OCI-LY7 (cell line): ENCODE measurements at regions of chr11 and their contacts with region 1.

Region 1: DNA sequence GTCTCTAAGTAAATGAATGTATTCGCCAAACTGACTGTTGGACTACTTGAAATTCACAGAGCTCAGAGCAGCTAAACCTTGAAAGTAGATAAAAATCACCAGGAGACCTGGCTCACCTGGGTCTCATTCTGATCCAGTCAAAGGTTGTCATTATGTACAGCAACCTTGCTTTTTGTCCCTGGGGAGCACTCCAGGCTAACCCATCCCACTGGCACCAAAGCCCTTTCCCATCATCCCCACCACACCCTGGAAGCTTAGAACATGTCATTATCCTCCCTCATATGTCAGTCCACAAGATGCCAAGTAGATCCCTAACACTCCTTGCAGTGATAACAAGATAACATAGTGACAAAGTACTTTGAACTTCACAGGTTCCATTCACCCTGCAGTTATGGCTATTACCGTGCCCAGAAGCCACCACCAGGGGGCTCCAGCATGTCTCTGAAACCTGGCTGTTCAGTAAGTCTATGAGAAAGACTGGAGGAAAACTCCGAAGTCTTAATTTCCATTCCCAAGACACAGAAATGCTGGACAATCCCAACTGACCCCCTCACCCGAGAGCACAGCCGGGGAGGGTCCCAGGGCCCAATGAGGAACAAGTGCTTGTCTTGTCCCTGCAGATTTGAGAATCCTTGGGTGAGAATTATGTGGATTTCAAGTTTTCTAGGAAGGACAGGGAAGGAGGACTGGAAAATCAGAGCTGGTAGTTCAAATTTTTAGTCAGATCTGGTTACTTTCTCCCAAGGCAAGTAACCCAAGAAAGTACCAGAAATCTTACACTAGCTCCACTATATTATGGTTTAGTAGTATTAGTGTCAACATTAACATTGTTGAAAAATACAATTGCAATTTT is 43.0 kb upstream of the USP47 start:
- DNase-seq: peak; percentile 69
- H3K4me3 ChIP-seq: no peak overlapping the region
- H3K27ac ChIP-seq: no peak overlapping the region
- H3K4me1 ChIP-seq: no peaks in the 10 kb centered on the region
- CTCF ChIP-seq: peak; percentile 94

Region 2: DNA sequence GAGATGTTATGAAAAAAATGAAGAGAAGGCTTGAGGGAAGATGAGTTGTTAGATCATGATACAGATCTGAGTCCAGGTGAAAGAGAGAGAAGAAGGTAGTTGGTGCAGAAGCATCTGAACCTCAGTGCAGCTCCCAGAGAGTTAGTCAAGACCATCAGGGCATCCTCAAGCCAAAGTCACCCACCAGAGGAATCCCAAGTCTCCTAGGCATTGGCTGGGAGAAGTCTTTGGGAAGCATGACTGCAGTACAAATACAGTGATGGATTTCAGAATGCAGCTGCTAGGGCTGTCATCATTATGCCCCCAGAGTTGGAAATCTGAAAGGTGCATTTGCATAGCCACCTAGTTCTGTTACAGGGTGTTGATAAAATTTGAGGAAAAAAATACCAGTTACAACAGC is 117.3 kb before region 1 on chr11:
- CTCF ChIA-PET with region 1: no interaction called
- POLR2A ChIA-PET with region 1: no interaction called
- intact Hi-C with region 1: no loop called
- DNase-seq: no peak
- H3K4me3 ChIP-seq: no peak overlapping the region
- H3K27ac ChIP-seq: no peak overlapping the region
- H3K4me1 ChIP-seq: no peaks in the 10 kb centered on the region
- CTCF ChIP-seq: no peak

Region 3: DNA sequence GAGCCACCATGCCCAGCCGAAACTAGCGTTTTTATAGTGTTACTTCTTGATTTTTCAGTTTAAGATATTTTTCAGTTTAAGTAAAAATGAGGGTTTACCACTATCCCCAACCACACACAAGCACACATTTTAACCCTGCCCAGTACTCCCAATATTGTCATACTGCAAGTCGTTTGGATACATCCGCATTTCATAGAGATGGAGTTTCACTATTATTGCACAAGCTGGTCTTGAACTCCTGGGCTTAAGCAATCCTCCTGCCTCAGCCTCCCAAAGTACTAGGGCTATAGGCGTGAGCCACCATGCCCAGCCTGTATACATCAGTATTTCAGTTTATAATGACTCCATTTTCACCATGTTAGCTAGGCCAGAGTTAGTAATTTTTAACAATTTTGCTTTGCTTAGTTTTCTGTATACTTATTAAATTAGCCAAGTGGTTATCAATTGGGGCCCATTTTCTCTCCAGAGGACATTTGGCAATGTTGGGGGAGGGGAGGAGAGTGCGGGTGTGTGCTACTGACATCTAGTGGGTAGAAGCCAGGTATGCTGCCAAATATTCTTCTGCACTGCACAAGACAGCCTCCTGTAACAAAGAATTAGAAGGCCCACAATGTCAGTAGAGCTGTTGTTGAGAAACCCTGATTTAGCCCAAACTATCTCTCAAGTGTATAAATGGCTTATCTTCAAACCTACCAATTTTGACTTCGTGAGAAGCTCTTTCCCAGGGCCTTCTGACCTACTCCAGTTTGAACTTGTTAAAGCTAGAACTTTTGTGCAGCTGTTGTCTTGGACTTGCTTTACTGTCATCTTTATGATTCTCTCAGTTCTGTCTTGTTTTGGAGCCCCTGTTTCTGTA is 50.3 kb after region 1 on chr11:
- CTCF ChIA-PET with region 1: no interaction called
- POLR2A ChIA-PET with region 1: interaction called, 4 read pairs
- intact Hi-C with region 1: loop called (anchors 2 kb)
- DNase-seq: peak; percentile 74
- H3K4me3 ChIP-seq: no peak overlapping the region
- H3K27ac ChIP-seq: no peak overlapping the region
- H3K4me1 ChIP-seq: peaks cover 31% of the 10 kb centered on the region
- CTCF ChIP-seq: peak; percentile 92

Region 4: GRCh38 chr11:11966826-11967668 is 168.2 kb after region 1 on chr11:
- CTCF ChIA-PET with region 1: no interaction called
- POLR2A ChIA-PET with region 1: no interaction called
- intact Hi-C with region 1: loop called (anchors 2 kb)
- DNase-seq: peak; percentile 64
- H3K4me3 ChIP-seq: no peak overlapping the region
- H3K27ac ChIP-seq: no peak overlapping the region
- H3K4me1 ChIP-seq: no peaks in the 10 kb centered on the region
- CTCF ChIP-seq: peak; percentile 80

Region 5: GRCh38 chr11:12043959-12044819 is 245.4 kb after region 1 on chr11:
- CTCF ChIA-PET with region 1: no interaction called
- POLR2A ChIA-PET with region 1: interaction called, 3 read pairs
- intact Hi-C with region 1: loop called (anchors 1 kb)
- DNase-seq: peak; percentile 64
- H3K4me3 ChIP-seq: no peak overlapping the region
- H3K27ac ChIP-seq: no peak overlapping the region
- H3K4me1 ChIP-seq: no peaks in the 10 kb centered on the region
- CTCF ChIP-seq: peak; percentile 93

Region 6: DNA sequence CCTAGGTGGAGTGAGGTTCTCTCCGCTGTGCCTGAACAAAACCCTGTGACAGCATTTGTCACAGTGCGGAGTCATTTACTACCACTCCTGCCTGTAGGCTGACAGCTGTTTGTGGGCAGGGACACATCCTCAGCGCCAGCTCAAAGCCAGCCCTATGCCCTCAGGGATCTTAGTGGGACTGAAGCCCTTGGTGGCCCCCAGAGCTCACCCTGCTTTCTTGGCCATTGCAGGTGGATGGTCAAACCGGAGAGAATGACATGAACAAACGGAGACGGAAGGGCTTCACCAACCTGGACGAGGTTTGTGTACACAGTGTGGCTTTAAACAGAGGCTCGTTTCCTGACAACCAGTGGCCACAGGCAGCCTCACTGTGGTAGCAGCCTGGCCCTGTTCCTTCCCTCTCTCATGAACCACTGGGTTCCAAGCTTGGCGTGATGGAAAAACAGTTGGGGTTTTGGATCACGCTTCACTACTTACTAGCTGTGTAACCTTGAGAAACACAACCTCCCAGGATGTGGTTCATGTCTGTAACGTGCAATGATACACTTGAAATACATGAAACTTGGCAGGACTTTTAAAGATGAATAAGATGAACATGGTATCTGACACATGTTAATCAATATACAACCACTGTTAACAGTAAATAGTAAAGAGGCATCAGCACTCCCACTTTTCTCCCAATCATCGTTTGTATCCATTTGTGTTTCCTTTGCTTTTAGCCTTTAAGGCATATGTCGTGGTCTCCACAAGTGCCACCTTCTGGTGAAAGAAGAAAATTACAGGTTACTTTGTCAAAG is 437.3 kb after region 1 on chr11:
- CTCF ChIA-PET with region 1: no interaction called
- POLR2A ChIA-PET with region 1: no interaction called
- intact Hi-C with region 1: loop called (anchors 5 kb)
- DNase-seq: peak; percentile 41
- H3K4me3 ChIP-seq: no peak overlapping the region
- H3K27ac ChIP-seq: no peak overlapping the region
- H3K4me1 ChIP-seq: no peaks in the 10 kb centered on the region
- CTCF ChIP-seq: peak; percentile 79

Region 7: GRCh38 chr11:12281571-12282478 is 483.0 kb after region 1 on chr11:
- CTCF ChIA-PET with region 1: no interaction called
- POLR2A ChIA-PET with region 1: no interaction called
- intact Hi-C with region 1: loop called (anchors 5 kb)
- DNase-seq: peak; percentile 72
- H3K4me3 ChIP-seq: no peak overlapping the region
- H3K27ac ChIP-seq: no peak overlapping the region
- H3K4me1 ChIP-seq: no peaks in the 10 kb centered on the region
- CTCF ChIP-seq: peak; percentile 94